PC-3 (cell line): ENCODE measurements at regions of chr1 and their contacts with region 1.

Region 1: GRCh38 chr1:163528710-163529348 is 207.1 kb downstream of the NUF2 start:
- DNase-seq: peak; percentile 67
- ATAC-seq: peak; percentile 70
- H3K4me3 ChIP-seq: no peak overlapping the region
- H3K27ac ChIP-seq: no peak overlapping the region
- H3K4me1 ChIP-seq: no peaks in the 10 kb centered on the region
- H3K27me3 ChIP-seq: peaks cover 27% of the 10 kb centered on the region
- CTCF ChIP-seq: peak; percentile 72

Region 2: DNA sequence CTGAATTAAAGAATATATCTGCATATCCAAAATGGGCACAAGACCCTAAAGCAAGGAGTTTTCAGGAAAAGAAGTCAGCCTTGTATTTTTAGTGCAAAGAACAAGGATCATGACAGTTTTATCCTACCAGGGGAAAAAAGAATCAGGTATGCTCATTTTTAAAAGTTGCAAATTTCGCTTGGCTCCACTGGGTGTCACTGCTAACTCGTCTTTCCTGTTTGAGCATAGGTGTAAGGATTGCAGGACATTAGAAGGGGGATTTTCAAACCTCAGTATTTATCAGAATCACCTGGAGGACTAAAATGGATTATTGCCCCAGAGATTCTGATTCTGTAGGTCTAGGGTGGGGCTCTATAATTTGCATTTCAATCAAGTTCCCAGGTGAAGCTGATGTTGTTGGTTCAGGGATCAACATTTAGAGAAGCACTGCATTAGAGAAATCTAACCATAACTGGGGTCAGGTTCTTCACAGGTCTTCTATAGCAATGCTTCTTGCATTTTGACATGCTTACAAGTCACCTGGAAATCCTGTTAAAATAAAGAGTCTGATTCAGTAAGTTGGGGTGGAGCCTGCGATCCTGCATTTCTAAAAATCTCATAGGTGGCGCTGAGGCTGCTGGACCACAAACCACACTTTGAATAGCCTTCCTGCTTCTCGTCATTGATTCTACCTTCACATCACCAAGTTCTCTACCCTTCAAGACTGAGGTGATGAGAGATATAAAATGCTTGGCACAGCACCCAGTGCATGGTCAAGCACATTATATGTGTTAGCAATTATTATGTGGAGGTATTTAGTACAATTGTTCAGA is 167.5 kb before region 1 on chr1:
- CTCF ChIA-PET with region 1: no interaction called
- POLR2A ChIA-PET with region 1: no interaction called
- intact Hi-C with region 1: loop called (anchors 1 kb)
- DNase-seq: peak; percentile 60
- ATAC-seq: peak; percentile 83
- H3K4me3 ChIP-seq: no peak overlapping the region
- H3K27ac ChIP-seq: no peak overlapping the region
- H3K4me1 ChIP-seq: no peaks in the 10 kb centered on the region
- H3K27me3 ChIP-seq: peaks cover 8% of the 10 kb centered on the region
- CTCF ChIP-seq: peak; percentile 82

Region 3: GRCh38 chr1:163410073-163410999 is 118.5 kb before region 1 on chr1:
- CTCF ChIA-PET with region 1: no interaction called
- POLR2A ChIA-PET with region 1: no interaction called
- intact Hi-C with region 1: loop called (anchors 1 kb)
- DNase-seq: peak; percentile 85
- ATAC-seq: peak; percentile 52
- H3K4me3 ChIP-seq: no peak overlapping the region
- H3K27ac ChIP-seq: no peak overlapping the region
- H3K4me1 ChIP-seq: no peaks in the 10 kb centered on the region
- H3K27me3 ChIP-seq: peaks cover 40% of the 10 kb centered on the region
- CTCF ChIP-seq: peak; percentile 97